ENCODE measurements at regions of chr2 and their contacts with region 1.

Region 1: GRCh38 chr2:71157124-71157793 is 26.8 kb downstream of the MPHOSPH10 start:
- DNase-seq: peak; percentile 41
- ATAC-seq: peak; percentile 68
- H3K4me3 Mint-ChIP-seq: no peak overlapping the region
- H3K27ac Mint-ChIP-seq: no peak overlapping the region
- H3K4me1 Mint-ChIP-seq: peaks cover 4% of the 10 kb centered on the region
- H3K27me3 Mint-ChIP-seq: peaks cover 10% of the 10 kb centered on the region
- CTCF ChIP-seq: no peak

Region 2: GRCh38 chr2:71018625-71019024 is 138.6 kb before region 1 on chr2:
- CTCF ChIA-PET with region 1: interaction called, 4 read pairs
- POLR2A ChIA-PET with region 1: no interaction called
- intact Hi-C with region 1: loop called (anchors 1 kb)
- DNase-seq: no peak
- ATAC-seq: no peak
- H3K4me3 Mint-ChIP-seq: no peak overlapping the region
- H3K27ac Mint-ChIP-seq: no peak overlapping the region
- H3K4me1 Mint-ChIP-seq: peaks cover 5% of the 10 kb centered on the region
- H3K27me3 Mint-ChIP-seq: no peaks in the 10 kb centered on the region
- CTCF ChIP-seq: no peak

Region 3: DNA sequence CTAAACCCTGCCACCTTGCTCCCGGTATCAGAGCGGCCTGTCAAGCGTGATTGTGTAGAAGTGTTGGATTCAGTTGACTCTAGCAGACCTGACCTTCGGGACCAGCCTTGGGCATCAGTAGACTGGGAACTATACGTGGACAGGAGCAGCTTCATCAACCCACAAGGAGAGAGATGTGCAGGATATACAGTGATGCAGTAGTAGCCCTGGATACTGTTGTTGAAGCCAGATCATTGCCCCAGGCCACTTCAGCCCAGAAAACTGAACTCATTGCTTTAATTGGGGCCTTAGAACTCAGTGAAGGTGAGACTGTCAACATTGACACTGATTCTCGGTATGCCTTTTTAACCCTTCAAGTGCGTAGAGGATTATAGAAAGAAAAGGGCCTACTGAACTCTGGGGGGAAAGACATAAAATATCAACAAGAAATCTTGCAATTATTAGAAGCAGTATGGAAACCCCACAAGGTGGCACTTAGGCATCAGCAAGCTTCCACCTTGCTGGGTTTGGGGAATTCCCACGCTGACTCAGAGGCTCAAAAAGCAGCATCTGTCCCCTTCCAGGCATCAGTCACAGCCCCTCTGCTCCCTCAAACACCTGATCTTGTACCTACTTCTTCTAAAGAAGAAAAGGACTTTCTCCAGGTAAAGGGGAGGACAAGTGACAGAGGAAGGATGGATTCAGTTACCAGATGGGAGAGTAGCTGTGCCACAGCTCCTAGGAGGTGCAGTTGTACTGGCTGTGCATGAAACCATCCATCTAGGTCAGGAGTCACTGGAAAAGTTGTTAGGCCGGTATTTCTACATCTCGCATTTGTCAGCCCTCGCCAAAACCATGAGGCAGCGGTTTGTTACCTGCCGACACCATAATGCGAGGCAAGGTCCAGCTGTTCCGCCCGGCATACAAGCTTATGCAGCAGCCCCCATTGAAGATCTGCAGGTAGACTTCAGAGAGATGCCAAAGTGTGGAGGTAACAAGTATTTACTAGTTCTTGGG is 107.6 kb before region 1 on chr2:
- CTCF ChIA-PET with region 1: interaction called, 18 read pairs
- POLR2A ChIA-PET with region 1: no interaction called
- intact Hi-C with region 1: loop called (anchors 1 kb)
- DNase-seq: no peak
- ATAC-seq: peak; percentile 82
- H3K4me3 Mint-ChIP-seq: no peak overlapping the region
- H3K27ac Mint-ChIP-seq: no peak overlapping the region
- H3K4me1 Mint-ChIP-seq: peaks cover 7% of the 10 kb centered on the region
- H3K27me3 Mint-ChIP-seq: no peaks in the 10 kb centered on the region
- CTCF ChIP-seq: no peak

Region 4: DNA sequence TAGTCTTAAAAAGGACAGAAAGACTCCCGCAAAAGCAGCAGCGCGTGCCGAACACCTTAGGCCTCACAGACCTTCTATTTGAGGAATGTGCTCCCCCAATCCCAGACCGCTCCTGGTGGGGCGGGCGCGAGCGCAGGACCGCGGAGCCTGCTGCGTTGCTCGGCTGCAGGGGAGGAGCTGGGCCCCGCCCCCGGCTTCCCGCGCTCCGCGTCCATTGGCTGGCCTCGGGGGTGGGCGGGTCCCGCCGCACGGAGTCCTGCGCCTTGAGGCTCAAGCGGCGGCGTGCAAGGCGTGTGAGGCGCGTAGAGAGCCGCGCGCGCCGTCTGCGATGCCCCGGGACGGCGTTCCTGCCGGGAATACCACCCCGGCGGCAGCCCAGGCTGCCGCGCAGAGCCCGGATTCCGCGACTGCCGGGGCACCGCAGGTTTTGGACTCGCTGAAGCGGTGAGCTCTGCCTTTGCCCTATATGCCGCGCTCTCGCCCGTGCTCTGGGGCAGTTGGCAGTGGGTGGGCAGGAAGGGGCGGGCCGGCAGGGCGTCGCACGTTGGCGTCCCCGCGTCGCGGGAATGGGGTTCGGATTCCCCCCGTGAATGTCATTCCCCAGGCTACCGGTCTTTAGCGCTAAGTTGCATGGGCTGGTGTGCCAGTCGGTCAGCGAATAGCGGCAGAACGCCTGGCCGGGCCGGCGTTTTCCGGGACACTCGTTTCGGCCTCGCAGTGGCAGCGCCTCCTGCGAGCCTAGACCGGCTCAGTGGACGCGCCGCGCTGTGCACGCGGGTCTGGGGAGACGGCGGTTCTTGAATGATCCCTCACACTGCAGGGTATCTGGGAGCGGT is 119.3 kb after region 1 on chr2:
- CTCF ChIA-PET with region 1: no interaction called
- POLR2A ChIA-PET with region 1: no interaction called
- intact Hi-C with region 1: loop called (anchors 5 kb)
- DNase-seq: peak; percentile 90
- ATAC-seq: peak; percentile 99
- H3K4me3 Mint-ChIP-seq: peak overlapping the region; percentile 84
- H3K27ac Mint-ChIP-seq: no peak overlapping the region
- H3K4me1 Mint-ChIP-seq: peaks cover 12% of the 10 kb centered on the region
- H3K27me3 Mint-ChIP-seq: peaks cover 47% of the 10 kb centered on the region
- CTCF ChIP-seq: no peak

Region 5: GRCh38 chr2:71510196-71510807 is 353.0 kb after region 1 on chr2:
- CTCF ChIA-PET with region 1: interaction called, 16 read pairs
- POLR2A ChIA-PET with region 1: no interaction called
- intact Hi-C with region 1: loop called (anchors 1 kb)
- DNase-seq: peak; percentile 57
- ATAC-seq: peak; percentile 74
- H3K4me3 Mint-ChIP-seq: no peak overlapping the region
- H3K27ac Mint-ChIP-seq: no peak overlapping the region
- H3K4me1 Mint-ChIP-seq: peaks cover 2% of the 10 kb centered on the region
- H3K27me3 Mint-ChIP-seq: peaks cover 5% of the 10 kb centered on the region
- CTCF ChIP-seq: no peak